ENCODE measurements at regions of chr16 and their contacts with region 1.

Region 1: DNA sequence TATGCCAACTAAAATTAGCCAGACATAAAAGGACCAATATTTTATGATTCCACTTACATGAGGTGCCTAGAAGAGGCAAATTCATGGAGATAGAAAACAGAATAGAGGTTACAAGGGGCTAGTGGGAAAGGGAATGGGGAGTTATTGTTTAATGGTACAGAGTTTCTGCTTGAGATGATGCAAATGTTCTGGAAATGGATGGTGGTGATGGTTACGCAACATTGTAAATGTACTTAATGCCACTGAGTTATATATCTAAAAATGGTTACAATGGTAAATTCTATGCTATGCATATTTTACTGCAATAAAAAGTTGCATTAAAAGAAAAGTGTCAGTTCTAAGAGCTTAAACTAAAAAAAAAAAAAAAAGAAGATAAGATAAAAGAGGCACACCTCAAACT is 17.9 kb downstream of the MT1X start:
- DNase-seq: no peak
- H3K4me3 ChIP-seq: no peak overlapping the region
- H3K27ac ChIP-seq: no peak overlapping the region
- H3K4me1 ChIP-seq: peaks cover 0 to 7% (median 0%) of the 10 kb centered on the region in 4 donors
- H3K27me3 ChIP-seq: no peaks in the 10 kb centered on the region
- CTCF ChIP-seq: no peak
- EP300 ChIP-seq: no peak
- POLR2A ChIP-seq: no peak

Region 2: GRCh38 chr16:56513972-56514371 is 186.2 kb before region 1 on chr16:
- in situ Hi-C with region 1: loop called in 2 of 4 experiments (anchors 5 kb)
- intact Hi-C with region 1: loop called (anchors 5 kb)
- DNase-seq: peak; percentile 60
- H3K4me3 ChIP-seq: no peak overlapping the region
- H3K27ac ChIP-seq: no peak overlapping the region
- H3K4me1 ChIP-seq: peaks cover 3 to 27% (median 5%) of the 10 kb centered on the region in 4 donors
- H3K27me3 ChIP-seq: no peaks in the 10 kb centered on the region
- CTCF ChIP-seq: peak; percentile 56 to 67 (median 64)
- EP300 ChIP-seq: no peak
- POLR2A ChIP-seq: no peak

Region 3: GRCh38 chr16:56576585-56577293 is 123.5 kb before region 1 on chr16:
- in situ Hi-C with region 1: loop called in 3 of 4 experiments (anchors 5 to 10 kb)
- intact Hi-C with region 1: loop called (anchors 5 kb)
- DNase-seq: peak; percentile 90
- H3K4me3 ChIP-seq: no peak overlapping the region
- H3K27ac ChIP-seq: no peak overlapping the region
- H3K4me1 ChIP-seq: no peaks in the 10 kb centered on the region
- H3K27me3 ChIP-seq: no peaks in the 10 kb centered on the region
- CTCF ChIP-seq: peak; percentile 73 to 91 (median 86)
- EP300 ChIP-seq: no peak
- POLR2A ChIP-seq: no peak

Measured in transverse colon (tissue), 4 donors.